Activated naive CD4-positive, alpha-beta T cell treated with anti-CD3 and anti-CD28 coated beads for 36 hours (primary cell): ENCODE measurements at regions of chr7 and their contacts with region 1.

Region 1: GRCh38 chr7:35624299-35625186 is 70.4 kb downstream of the HERPUD2 start:
- DNase-seq: peak; percentile 51
- H3K4me3 Mint-ChIP-seq: no peak overlapping the region
- H3K27ac Mint-ChIP-seq: no peak overlapping the region
- H3K4me1 Mint-ChIP-seq: peaks cover 2% of the 10 kb centered on the region
- H3K27me3 Mint-ChIP-seq: no peaks in the 10 kb centered on the region

Region 2: GRCh38 chr7:34675749-34676374 is 948.7 kb before region 1 on chr7:
- CTCF ChIA-PET with region 1: no interaction called
- intact Hi-C with region 1: loop called (anchors 10 kb)
- DNase-seq: peak; percentile 37
- H3K4me3 Mint-ChIP-seq: no peak overlapping the region
- H3K27ac Mint-ChIP-seq: no peak overlapping the region
- H3K4me1 Mint-ChIP-seq: no peaks in the 10 kb centered on the region
- H3K27me3 Mint-ChIP-seq: peaks cover 4% of the 10 kb centered on the region

Region 3: GRCh38 chr7:35424869-35425495 is 199.6 kb before region 1 on chr7:
- CTCF ChIA-PET with region 1: interaction called, 13 read pairs
- intact Hi-C with region 1: loop called (anchors 1 kb)
- DNase-seq: peak; percentile 69
- H3K4me3 Mint-ChIP-seq: no peak overlapping the region
- H3K27ac Mint-ChIP-seq: no peak overlapping the region
- H3K4me1 Mint-ChIP-seq: no peaks in the 10 kb centered on the region
- H3K27me3 Mint-ChIP-seq: peaks cover 17% of the 10 kb centered on the region

Region 4: DNA sequence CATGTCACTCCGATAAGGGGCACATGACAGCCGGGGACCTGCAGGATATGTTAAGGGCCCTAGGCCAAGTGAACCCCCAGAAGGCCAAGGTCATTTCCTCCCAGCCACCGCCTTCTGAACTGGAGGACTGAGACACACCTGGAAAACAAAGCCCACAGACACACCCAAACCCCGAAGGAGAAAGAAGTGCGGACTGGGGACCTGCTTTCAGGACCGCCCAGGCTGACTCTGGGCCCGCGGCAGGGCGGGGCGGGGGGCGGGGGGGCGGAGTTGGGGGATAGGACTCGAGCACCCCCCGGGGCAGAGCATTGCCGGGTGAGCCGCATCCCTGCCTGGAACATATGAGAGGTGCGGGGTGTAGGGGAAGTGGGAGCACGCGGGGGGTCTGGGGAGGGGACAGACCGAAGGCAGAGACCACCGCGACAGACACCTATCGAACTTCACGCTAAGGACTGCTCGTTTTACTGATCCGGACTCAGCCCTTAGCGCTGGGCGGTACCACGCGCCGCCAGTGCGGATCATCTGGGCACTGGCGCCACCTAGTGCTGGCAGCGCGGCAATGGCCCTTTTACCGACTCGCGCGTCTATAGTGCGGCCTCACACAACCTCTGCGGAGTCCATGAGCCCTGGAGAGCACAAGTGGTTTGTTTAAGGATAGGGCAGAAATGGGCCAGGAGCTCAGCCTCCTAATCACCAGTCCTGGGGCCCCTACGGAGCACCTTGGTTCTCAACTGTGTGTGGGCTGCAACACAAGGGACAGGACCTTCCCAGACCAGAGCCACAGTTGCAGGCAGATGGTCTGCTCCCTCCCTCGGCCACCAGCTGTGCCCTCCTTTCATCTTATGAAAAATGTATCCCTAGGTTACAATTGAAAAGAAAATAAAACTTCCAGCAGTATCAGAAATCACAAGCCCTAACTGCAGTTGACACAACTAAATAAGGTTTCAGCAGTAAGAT is 87.2 kb before region 1 on chr7:
- CTCF ChIA-PET with region 1: interaction called, 12 read pairs
- intact Hi-C with region 1: loop called (anchors 1 kb)
- DNase-seq: peak; percentile 79
- H3K4me3 Mint-ChIP-seq: peak overlapping the region; percentile 67
- H3K27ac Mint-ChIP-seq: no peak overlapping the region
- H3K4me1 Mint-ChIP-seq: peaks cover 1% of the 10 kb centered on the region
- H3K27me3 Mint-ChIP-seq: peaks cover 9% of the 10 kb centered on the region

Region 5: GRCh38 chr7:35906191-35906908 is 281.8 kb after region 1 on chr7:
- CTCF ChIA-PET with region 1: interaction called, 4 read pairs
- intact Hi-C with region 1: loop called (anchors 1 kb)
- DNase-seq: peak; percentile 82
- H3K4me3 Mint-ChIP-seq: no peak overlapping the region
- H3K27ac Mint-ChIP-seq: no peak overlapping the region
- H3K4me1 Mint-ChIP-seq: peaks cover 4% of the 10 kb centered on the region
- H3K27me3 Mint-ChIP-seq: no peaks in the 10 kb centered on the region

Region 6: DNA sequence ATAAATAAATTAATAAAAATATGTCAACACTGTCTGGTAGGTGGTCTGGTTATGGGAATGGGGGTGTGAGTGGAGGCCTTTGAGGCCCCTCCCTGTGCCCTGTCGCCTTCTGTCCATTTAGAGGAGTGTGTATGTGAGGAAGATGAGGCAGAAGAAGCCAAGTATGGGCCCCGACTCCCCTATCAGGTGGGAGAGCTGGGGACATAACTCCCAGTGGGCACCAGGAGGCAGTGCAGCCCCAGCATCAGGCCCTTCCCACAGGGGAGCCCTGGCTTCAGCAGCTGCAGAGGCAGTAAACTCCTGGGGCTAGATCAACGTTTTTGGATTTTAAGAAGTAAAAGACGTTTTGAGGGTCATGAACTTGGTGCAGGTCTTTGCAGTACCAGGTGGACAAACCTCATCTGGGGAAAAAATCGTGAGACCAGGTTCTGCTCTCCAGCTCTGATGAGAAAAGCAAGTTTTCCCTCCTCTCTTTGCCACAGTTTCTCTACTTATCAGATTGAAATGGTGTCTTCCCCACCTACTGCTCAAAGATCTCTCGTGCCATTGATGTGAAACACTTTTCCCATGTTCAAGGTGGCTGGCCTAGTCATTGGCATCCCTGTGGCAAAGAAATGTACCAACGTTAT is 360.7 kb after region 1 on chr7:
- CTCF ChIA-PET with region 1: no interaction called
- intact Hi-C with region 1: no loop called
- DNase-seq: peak; percentile 85
- H3K4me3 Mint-ChIP-seq: no peak overlapping the region
- H3K27ac Mint-ChIP-seq: no peak overlapping the region
- H3K4me1 Mint-ChIP-seq: no peaks in the 10 kb centered on the region
- H3K27me3 Mint-ChIP-seq: no peaks in the 10 kb centered on the region

Region 7: DNA sequence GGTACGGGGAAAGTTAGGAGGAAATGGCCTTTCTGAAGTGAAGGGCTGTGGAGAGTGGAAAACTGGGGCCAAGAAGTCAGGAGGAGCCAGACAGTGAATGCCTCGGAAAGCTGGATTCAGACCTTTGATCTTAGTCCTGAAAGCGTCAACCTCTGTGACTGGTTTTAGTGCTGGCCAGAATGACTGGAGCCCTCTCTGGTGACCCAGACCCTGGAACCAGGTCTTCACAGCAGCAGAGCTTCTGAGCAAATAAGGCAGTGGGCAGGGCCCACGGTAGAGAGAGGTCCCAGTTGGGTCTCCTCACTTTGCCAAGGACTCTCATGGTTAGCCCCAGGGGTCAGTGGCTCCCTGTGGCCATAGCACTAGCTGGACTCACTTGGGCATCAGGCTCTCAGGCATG is 370.8 kb after region 1 on chr7:
- CTCF ChIA-PET with region 1: no interaction called
- intact Hi-C with region 1: no loop called
- DNase-seq: no peak
- H3K4me3 Mint-ChIP-seq: no peak overlapping the region
- H3K27ac Mint-ChIP-seq: no peak overlapping the region
- H3K4me1 Mint-ChIP-seq: peaks cover 3% of the 10 kb centered on the region
- H3K27me3 Mint-ChIP-seq: no peaks in the 10 kb centered on the region